CD8-positive, alpha-beta T cell (primary cell): ENCODE measurements at regions of chr10 and their contacts with region 1.

Region 1: DNA sequence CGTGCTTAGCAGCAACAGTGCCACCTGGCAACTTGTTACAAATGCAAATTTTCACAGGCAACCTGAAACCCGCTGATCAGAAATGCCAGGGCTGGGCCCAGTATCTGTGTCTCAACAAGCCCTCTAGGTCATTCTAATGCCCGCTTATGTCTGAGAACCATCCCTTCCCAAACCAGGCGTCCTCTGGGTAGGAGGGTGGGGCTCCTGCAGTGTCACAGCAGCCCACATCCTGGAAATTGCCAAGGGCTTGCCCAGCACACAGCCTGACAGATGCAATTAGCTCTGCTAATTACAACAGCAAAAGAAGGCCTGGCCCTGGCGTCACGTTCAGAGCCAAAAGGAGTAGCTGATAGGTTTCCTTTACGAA is 15.9 kb downstream of the ITPRIP start:
- DNase-seq: peak in 1 of 9 experiments; percentile 56
- ATAC-seq: peak; percentile 42
- H3K4me3 ChIP-seq: peak overlapping the region in 1 of 2 experiments; percentile 6
- H3K4me3 Mint-ChIP-seq: peak overlapping the region; percentile 75
- H3K27ac ChIP-seq: peak overlapping the region in 1 of 2 experiments; percentile 75
- H3K27ac Mint-ChIP-seq: peak overlapping the region; percentile 85
- H3K4me1 ChIP-seq: peaks cover 83% of the 10 kb centered on the region
- H3K4me1 Mint-ChIP-seq: peaks cover 91% of the 10 kb centered on the region
- H3K27me3 ChIP-seq: no peaks in the 10 kb centered on the region
- H3K27me3 Mint-ChIP-seq: no peaks in the 10 kb centered on the region
- CTCF ChIP-seq: no peak

Region 2: GRCh38 chr10:104337974-104338735 is 15.8 kb after region 1 on chr10 and contains the start of gene ITPRIP:
- CTCF ChIA-PET with region 1: interaction called, 7 read pairs
- POLR2A ChIA-PET with region 1: interaction called, 26 read pairs
- intact Hi-C with region 1: loop called in 1 of 2 experiments (anchors 2 kb)
- DNase-seq: peak; percentile 47 to 89 (median 76)
- ATAC-seq: peak; percentile 67
- H3K4me3 ChIP-seq: peak within 1 kb of the TSS; percentile 92 to 98
- H3K4me3 Mint-ChIP-seq: peak within 1 kb of the TSS; percentile 93
- H3K27ac ChIP-seq: peak within 1 kb of the TSS; percentile 92 to 93
- H3K27ac Mint-ChIP-seq: peak within 1 kb of the TSS; percentile 97
- H3K4me1 ChIP-seq: peaks cover 46% of the 10 kb centered on the region
- H3K4me1 Mint-ChIP-seq: peaks cover 54% of the 10 kb centered on the region
- H3K27me3 ChIP-seq: no peaks in the 10 kb centered on the region
- H3K27me3 Mint-ChIP-seq: no peaks in the 10 kb centered on the region
- CTCF ChIP-seq: no peak
- total RNA-seq, gene ITPRIP: 212 to 214 TPM

Region 3: GRCh38 chr10:104441329-104442000 is 119.1 kb after region 1 on chr10:
- CTCF ChIA-PET with region 1: no interaction called
- POLR2A ChIA-PET with region 1: no interaction called
- intact Hi-C with region 1: no loop called
- DNase-seq: no peak
- ATAC-seq: no peak
- H3K4me3 ChIP-seq: no peak overlapping the region
- H3K4me3 Mint-ChIP-seq: no peak overlapping the region
- H3K27ac ChIP-seq: no peak overlapping the region
- H3K27ac Mint-ChIP-seq: no peak overlapping the region
- H3K4me1 ChIP-seq: no peaks in the 10 kb centered on the region
- H3K4me1 Mint-ChIP-seq: no peaks in the 10 kb centered on the region
- H3K27me3 ChIP-seq: no peaks in the 10 kb centered on the region
- H3K27me3 Mint-ChIP-seq: peaks cover 2% of the 10 kb centered on the region
- CTCF ChIP-seq: no peak